ENCODE measurements at regions of chr10 and their contacts with region 1.

Region 1: GRCh38 chr10:59000162-59000825 is 176.1 kb upstream of the PHYHIPL start:
- DNase-seq: no peak
- H3K4me3 ChIP-seq: no peak overlapping the region
- H3K27ac ChIP-seq: no peak overlapping the region
- H3K4me1 ChIP-seq: no peaks in the 10 kb centered on the region
- H3K27me3 ChIP-seq: peaks cover 10% of the 10 kb centered on the region
- CTCF ChIP-seq: no peak

Region 2: DNA sequence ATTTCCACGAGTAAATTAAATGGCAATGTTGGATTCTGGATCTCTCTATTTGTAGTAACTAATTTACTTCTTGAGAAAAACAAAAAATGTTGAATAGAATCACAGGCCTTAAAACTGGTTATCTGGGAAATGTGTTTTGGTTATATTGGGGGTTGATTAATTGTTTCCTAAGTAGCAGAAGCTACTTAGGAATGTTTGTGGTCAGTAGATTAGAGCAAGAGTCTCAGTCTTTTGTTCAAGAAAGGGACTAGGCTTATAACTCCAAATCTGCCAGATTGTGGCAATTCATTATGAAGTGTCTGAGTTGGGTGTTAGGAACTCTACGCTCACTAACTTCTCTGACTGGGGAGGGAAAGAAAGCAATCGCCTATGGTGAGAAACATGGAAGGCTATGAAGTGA is 68.2 kb before region 1 on chr10:
- CTCF ChIA-PET with region 1: no interaction called
- dilution Hi-C with region 1: no loop called
- in situ Hi-C with region 1: no loop called
- intact Hi-C with region 1: no loop called
- DNase-seq: no peak
- H3K4me3 ChIP-seq: no peak overlapping the region
- H3K27ac ChIP-seq: no peak overlapping the region
- H3K4me1 ChIP-seq: peaks cover 5% of the 10 kb centered on the region
- H3K27me3 ChIP-seq: no peaks in the 10 kb centered on the region
- CTCF ChIP-seq: no peak

Region 3: DNA sequence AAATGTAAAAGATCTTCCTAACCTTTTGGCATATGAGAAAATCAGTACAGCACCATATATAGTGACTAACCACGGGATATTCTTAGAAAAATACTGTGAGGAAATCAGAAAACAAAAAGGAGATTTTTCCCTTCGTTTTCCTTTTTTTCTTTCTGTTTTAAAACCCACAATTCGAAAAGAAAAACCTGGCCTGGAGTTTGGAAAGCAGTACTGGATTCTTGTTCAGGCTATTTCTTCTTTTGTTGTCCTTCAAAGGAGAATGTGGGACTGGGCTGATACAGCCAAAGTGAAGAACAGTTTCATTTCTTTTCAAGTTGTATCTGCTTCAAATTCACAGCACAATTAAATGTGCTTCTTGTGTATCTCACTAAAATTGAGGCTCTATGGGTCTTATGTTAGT is 19.3 kb after region 1 on chr10:
- CTCF ChIA-PET with region 1: no interaction called
- dilution Hi-C with region 1: no loop called
- in situ Hi-C with region 1: no loop called
- intact Hi-C with region 1: no loop called
- DNase-seq: no peak
- H3K4me3 ChIP-seq: no peak overlapping the region
- H3K27ac ChIP-seq: no peak overlapping the region
- H3K4me1 ChIP-seq: no peaks in the 10 kb centered on the region
- H3K27me3 ChIP-seq: no peaks in the 10 kb centered on the region
- CTCF ChIP-seq: no peak

Region 4: GRCh38 chr10:59057345-59057744 is 57.1 kb after region 1 on chr10:
- CTCF ChIA-PET with region 1: no interaction called
- dilution Hi-C with region 1: no loop called
- in situ Hi-C with region 1: no loop called
- intact Hi-C with region 1: loop called (anchors 5 kb)
- DNase-seq: no peak
- H3K4me3 ChIP-seq: no peak overlapping the region
- H3K27ac ChIP-seq: no peak overlapping the region
- H3K4me1 ChIP-seq: no peaks in the 10 kb centered on the region
- H3K27me3 ChIP-seq: peaks cover 3% of the 10 kb centered on the region
- CTCF ChIP-seq: no peak

Measured in mammary epithelial cell (primary cell).